ENCODE measurements at regions of chr9 and their contacts with region 1.

Region 1: DNA sequence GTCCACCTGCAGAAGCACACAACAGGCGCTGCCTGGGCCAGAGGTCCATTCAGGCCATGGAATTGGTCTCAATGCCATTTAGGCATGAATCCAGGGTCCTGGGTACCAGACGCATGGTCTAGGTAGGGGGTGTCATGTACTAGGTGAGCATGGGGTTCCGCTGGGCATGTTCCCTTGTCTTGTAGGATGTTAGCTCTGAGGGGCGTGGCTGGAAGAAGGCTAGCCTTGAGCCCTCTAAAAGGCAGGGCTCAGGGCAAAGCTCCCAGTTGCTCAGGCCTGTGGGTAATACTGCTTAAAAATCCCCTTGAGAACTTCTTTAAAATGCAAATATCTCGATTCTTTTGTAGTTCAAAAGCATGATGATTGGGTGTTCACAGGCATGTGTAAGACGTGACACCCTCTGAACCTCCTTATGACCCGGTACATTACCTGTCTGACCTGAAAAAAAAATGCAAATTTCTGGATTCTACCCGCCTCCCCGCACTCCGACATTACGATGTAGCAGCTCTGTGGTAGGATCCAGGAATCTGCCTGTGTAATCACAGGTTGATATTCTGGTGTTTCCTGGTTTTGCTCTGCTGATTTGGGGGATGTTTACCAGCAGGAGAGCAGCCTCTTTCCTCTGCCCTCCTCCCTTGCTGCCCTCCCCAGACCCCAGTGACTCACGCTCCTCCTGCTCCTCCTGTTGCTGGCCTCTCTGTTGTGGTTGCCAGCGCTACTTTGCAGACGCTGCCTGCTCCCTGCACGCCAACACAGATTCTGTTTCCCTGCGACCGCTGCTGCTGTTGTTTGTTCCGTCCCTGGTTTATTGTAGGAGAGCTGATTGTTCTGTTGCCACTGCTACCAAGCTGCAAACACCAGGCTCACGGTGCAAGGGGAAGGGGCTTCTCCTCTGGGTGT is 5.7 kb downstream of the TMC1 start:
- DNase-seq: peak; percentile 90
- ATAC-seq: peak; percentile 88
- H3K4me3 Mint-ChIP-seq: peak overlapping the region; percentile 69
- H3K27ac Mint-ChIP-seq: peak overlapping the region; percentile 94
- H3K4me1 Mint-ChIP-seq: peaks cover 43% of the 10 kb centered on the region
- H3K27me3 Mint-ChIP-seq: no peaks in the 10 kb centered on the region

Region 2: GRCh38 chr9:72364679-72365524 is 162.2 kb before region 1 on chr9 and contains the start of gene ZFAND5:
- CTCF ChIA-PET with region 1: interaction called, 3 read pairs
- POLR2A ChIA-PET with region 1: interaction called, 7 read pairs
- intact Hi-C with region 1: loop called (anchors 1 kb)
- DNase-seq: peak; percentile 97
- ATAC-seq: peak; percentile 84
- H3K4me3 Mint-ChIP-seq: peak within 1 kb of the TSS; percentile 91
- H3K27ac Mint-ChIP-seq: peak within 1 kb of the TSS; percentile 99
- H3K4me1 Mint-ChIP-seq: peaks cover 37% of the 10 kb centered on the region
- H3K27me3 Mint-ChIP-seq: no peaks in the 10 kb centered on the region
- total RNA-seq, gene ZFAND5: 72.0 to 88.2 TPM

Region 3: DNA sequence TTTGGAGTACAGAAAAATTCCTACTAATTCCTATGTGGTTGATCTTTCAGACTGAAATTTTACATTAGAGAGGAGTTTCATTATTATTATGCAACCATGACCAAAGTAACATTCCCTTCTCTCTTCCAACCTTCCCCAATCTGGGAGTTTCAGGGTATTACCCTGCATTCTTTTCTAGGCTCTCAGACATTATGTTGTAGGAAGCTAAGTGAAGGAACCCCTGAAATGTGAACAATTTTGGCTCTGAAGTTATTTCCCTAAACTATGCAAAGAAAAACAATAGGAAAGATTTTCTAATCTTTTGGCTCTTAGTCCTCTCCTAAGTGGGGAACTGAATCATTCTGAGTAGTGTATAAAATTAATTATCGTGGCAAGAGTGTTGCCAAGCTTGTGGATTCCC is 98.8 kb before region 1 on chr9:
- CTCF ChIA-PET with region 1: no interaction called
- POLR2A ChIA-PET with region 1: no interaction called
- intact Hi-C with region 1: no loop called
- DNase-seq: no peak
- ATAC-seq: no peak
- H3K4me3 Mint-ChIP-seq: no peak overlapping the region
- H3K27ac Mint-ChIP-seq: no peak overlapping the region
- H3K4me1 Mint-ChIP-seq: no peaks in the 10 kb centered on the region
- H3K27me3 Mint-ChIP-seq: no peaks in the 10 kb centered on the region

Region 4: DNA sequence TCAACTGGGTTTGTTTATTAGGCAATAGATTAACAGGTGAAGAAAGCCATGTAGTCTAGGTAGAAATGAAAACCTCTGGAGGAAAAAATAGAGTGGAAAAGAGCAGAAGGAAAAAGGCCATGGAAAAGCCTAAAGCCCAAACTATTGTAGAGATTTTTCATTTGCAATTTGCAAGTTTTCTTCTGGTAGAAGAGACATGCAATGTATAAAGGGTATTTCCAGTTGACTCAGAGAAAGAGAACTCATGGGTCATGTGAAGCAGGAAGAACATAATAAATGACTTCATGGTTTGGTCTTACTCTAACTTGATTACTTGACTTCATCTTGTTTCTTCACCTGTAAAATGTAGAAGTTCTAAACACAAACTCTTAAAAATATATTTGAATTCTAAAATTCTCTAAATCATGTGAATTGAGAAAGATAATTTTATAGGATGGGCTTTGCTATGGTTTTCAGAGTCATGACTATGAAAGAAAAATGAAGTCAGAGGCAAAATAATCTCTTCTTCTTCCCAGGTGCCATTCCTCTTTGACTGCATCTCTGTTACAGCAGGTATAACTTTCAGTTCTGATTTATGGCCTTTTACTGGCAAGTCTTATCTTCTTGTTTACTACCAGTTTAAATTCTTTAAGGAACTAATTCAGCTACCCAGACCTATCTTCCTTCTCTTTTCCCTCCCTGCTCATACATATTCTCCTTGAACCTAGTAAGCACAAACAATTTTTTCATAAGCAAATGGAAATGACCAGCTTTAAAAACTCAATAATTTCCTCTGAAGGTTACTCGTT is 53.5 kb before region 1 on chr9:
- CTCF ChIA-PET with region 1: interaction called, 3 read pairs
- POLR2A ChIA-PET with region 1: no interaction called
- intact Hi-C with region 1: loop called (anchors 1 kb)
- DNase-seq: no peak
- ATAC-seq: peak; percentile 83
- H3K4me3 Mint-ChIP-seq: no peak overlapping the region
- H3K27ac Mint-ChIP-seq: peak overlapping the region; percentile 88
- H3K4me1 Mint-ChIP-seq: peaks cover 40% of the 10 kb centered on the region
- H3K27me3 Mint-ChIP-seq: no peaks in the 10 kb centered on the region

Region 5: DNA sequence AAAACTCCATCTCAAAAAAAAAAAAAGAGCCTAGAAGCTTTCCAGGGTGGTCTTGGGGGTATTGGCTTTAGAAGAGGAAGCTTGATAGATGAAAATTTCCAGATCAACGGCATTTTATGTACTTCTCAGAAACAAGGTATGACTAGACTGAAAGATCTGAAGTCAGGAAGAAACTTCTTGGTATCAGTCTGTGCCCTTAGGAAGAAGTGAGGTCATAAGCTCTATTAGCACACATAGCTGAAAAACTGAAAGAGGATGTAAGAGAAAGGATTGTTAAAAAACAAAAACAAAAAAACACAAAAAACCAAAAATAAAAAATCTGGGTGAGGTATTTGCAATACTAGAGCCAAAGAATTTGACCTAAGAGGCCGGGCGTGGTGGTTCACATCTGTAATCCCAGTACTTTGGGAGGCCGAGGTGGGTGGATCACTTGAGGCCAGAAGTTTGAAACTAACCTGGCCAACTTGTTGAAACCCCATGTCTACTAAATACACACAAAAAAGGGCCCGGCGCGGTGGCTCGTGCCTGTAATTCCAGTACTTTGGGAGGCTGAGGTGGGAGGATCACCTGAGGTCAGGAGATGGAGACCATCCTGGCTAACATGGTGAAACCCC is 14.6 kb after region 1 on chr9:
- CTCF ChIA-PET with region 1: interaction called, 7 read pairs
- POLR2A ChIA-PET with region 1: interaction called, 3 read pairs
- intact Hi-C with region 1: loop called in 1 of 2 experiments (anchors 1 kb)
- DNase-seq: peak; percentile 16
- ATAC-seq: peak; percentile 69
- H3K4me3 Mint-ChIP-seq: no peak overlapping the region
- H3K27ac Mint-ChIP-seq: peak overlapping the region; percentile 76
- H3K4me1 Mint-ChIP-seq: peaks cover 15% of the 10 kb centered on the region
- H3K27me3 Mint-ChIP-seq: peaks cover 2% of the 10 kb centered on the region

Region 6: DNA sequence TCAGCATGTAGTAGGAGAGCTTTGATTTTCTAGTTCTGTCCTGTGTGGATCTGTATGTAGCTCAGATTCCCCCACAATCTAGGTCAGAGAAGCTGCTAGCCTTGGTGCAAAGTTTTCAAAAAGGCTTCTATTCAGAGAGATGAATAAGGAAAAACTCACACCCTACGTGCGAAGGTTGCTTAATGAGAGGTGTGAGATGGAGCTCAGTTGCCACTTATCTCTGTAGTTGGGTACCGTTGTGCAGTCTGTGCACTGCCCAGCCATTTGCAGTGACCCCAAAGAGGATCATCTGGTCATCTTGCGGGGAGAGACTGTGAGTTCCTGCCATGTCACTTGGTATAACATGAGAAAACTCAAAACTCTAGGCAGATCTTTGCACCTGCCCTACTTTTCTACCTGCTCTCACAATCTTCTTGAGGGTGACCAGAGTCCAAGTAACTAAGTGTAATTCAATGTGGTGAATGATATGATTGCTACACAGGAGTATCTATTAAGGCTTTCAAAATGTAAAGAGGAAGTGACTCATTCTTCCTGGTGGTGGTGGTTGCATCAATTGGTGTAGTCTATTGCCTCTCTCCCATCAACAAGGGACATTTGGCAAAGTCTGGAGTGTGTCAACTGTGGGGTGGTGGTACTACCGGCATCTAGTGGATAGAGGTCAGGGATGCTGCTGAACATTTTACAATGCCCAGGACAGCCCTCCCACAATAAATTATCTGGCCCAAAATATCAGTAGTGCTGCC is 59.4 kb after region 1 on chr9:
- CTCF ChIA-PET with region 1: interaction called, 3 read pairs
- POLR2A ChIA-PET with region 1: interaction called, 6 read pairs
- intact Hi-C with region 1: loop called (anchors 5 to 10 kb)
- DNase-seq: peak; percentile 31
- ATAC-seq: peak; percentile 81
- H3K4me3 Mint-ChIP-seq: no peak overlapping the region
- H3K27ac Mint-ChIP-seq: peak overlapping the region; percentile 67
- H3K4me1 Mint-ChIP-seq: peaks cover 36% of the 10 kb centered on the region
- H3K27me3 Mint-ChIP-seq: peaks cover 3% of the 10 kb centered on the region

Region 7: GRCh38 chr9:72623156-72623555 is 96.0 kb after region 1 on chr9:
- CTCF ChIA-PET with region 1: no interaction called
- POLR2A ChIA-PET with region 1: no interaction called
- intact Hi-C with region 1: no loop called
- DNase-seq: no peak
- ATAC-seq: no peak
- H3K4me3 Mint-ChIP-seq: no peak overlapping the region
- H3K27ac Mint-ChIP-seq: no peak overlapping the region
- H3K4me1 Mint-ChIP-seq: no peaks in the 10 kb centered on the region
- H3K27me3 Mint-ChIP-seq: peaks cover 2% of the 10 kb centered on the region

Region 8: DNA sequence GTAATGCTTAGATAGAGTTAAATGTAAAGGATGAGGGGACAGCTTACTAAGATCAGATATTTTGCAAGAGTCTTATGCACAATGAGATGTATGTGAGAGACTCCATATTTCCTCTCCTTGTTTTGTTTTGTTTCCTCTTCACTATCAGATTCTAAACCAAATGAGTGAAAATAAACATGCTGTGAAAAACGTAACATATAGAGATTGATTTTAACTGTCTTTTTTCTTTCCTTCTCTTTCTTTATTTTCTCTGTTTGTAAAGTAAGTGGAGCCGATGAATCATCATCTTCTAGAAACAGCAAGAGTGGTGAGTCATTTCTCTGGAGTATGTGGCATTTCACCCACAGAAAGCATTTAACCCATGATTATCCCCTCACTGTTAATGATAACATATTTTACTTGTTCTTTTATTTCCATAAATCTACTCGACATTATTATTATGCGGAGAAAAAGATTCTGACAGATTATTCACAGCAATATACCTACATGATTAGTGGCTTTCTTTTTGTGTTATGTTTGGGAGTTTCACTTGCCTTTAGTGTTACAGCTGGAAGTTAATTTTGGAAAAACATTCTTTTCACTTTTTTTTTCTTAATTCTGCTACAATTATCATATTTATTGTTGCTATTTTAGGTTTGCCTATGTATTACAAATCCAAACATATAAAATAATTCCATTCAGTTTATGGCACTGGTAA is 622.4 kb after region 1 on chr9:
- CTCF ChIA-PET with region 1: no interaction called
- POLR2A ChIA-PET with region 1: no interaction called
- intact Hi-C with region 1: loop called in 1 of 2 experiments (anchors 5 kb)
- DNase-seq: no peak
- ATAC-seq: peak; percentile 65
- H3K4me3 Mint-ChIP-seq: peak overlapping the region; percentile 64
- H3K27ac Mint-ChIP-seq: peak overlapping the region; percentile 81
- H3K4me1 Mint-ChIP-seq: peaks cover 61% of the 10 kb centered on the region
- H3K27me3 Mint-ChIP-seq: no peaks in the 10 kb centered on the region

Measured in activated CD4-positive, alpha-beta T cell treated with anti-CD3 and anti-CD28 coated beads for 36 hours (primary cell).